MCF 10A (cell line): ENCODE measurements at regions of chr9 and their contacts with region 1.

Region 1: GRCh38 chr9:94139672-94140417 is 55.6 kb downstream of the PTPDC1 start:
- DNase-seq: peak; percentile 97
- H3K4me3 Mint-ChIP-seq: peak overlapping the region; percentile 62
- H3K27ac Mint-ChIP-seq: peak overlapping the region; percentile 93
- H3K4me1 Mint-ChIP-seq: peaks cover 69% of the 10 kb centered on the region
- H3K27me3 Mint-ChIP-seq: no peaks in the 10 kb centered on the region
- CTCF ChIP-seq: no peak

Region 2: GRCh38 chr9:94084314-94084713 is 55.5 kb before region 1 on chr9 and contains the start of gene PTPDC1:
- CTCF ChIA-PET with region 1: interaction called, 7 read pairs
- POLR2A ChIA-PET with region 1: interaction called, 15 read pairs
- intact Hi-C with region 1: no loop called
- DNase-seq: peak; percentile 32
- H3K4me3 Mint-ChIP-seq: peak within 1 kb of the TSS; percentile 47
- H3K27ac Mint-ChIP-seq: peak within 1 kb of the TSS; percentile 85
- H3K4me1 Mint-ChIP-seq: peaks cover 23% of the 10 kb centered on the region
- H3K27me3 Mint-ChIP-seq: no peaks in the 10 kb centered on the region
- CTCF ChIP-seq: no peak
- total RNA-seq, gene PTPDC1: 42.2 and 49.9 TPM in 2 replicates

Region 3: GRCh38 chr9:94127806-94128205 is 12.0 kb before region 1 on chr9:
- CTCF ChIA-PET with region 1: no interaction called
- POLR2A ChIA-PET with region 1: interaction called, 18 read pairs
- intact Hi-C with region 1: no loop called
- DNase-seq: no peak
- H3K4me3 Mint-ChIP-seq: no peak overlapping the region
- H3K27ac Mint-ChIP-seq: no peak overlapping the region
- H3K4me1 Mint-ChIP-seq: peaks cover 5% of the 10 kb centered on the region
- H3K27me3 Mint-ChIP-seq: no peaks in the 10 kb centered on the region
- CTCF ChIP-seq: no peak

Region 4: DNA sequence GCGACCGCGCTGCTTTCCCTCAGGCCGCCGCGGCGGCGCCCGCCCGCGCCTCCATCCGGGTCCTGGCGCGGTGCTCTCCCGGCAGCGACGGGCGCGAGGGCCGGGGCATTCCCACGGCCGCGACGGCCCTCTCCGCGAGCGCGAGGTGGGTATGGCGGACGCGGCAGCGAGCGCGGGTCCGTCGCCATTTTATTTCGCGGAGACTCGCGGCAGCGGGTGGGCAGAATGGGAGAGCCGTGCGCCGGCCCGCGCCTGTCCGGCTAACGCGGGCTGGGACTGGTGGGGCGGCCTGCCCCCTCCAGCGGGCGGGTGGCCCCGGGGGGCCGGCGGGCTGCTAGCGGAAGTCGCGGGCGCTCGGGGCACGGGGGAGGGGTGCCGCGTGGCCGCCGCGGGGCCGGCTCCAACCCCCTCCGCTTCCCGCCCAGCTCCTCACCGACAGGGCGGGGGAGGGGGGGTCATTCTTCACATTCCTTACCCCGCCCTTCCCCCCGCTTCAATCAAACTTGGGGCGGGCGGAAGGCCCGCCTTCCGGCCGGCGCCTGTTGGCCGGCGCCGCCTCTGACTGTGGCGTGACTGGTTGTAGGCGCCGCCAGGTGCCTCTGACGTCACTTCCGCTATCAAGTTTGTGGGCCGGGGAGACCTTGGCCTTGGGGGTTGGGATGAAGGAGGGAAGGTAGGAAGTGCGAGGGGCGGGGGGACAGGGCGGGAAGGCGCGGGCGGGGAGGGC is 26.6 kb after region 1 on chr9:
- CTCF ChIA-PET with region 1: interaction called, 10 read pairs
- POLR2A ChIA-PET with region 1: interaction called, 330 read pairs
- intact Hi-C with region 1: loop called (anchors 1 kb)
- DNase-seq: peak; percentile 99
- H3K4me3 Mint-ChIP-seq: peak overlapping the region; percentile 83
- H3K27ac Mint-ChIP-seq: peak overlapping the region; percentile 86
- H3K4me1 Mint-ChIP-seq: peaks cover 22% of the 10 kb centered on the region
- H3K27me3 Mint-ChIP-seq: no peaks in the 10 kb centered on the region
- CTCF ChIP-seq: no peak

Region 5: DNA sequence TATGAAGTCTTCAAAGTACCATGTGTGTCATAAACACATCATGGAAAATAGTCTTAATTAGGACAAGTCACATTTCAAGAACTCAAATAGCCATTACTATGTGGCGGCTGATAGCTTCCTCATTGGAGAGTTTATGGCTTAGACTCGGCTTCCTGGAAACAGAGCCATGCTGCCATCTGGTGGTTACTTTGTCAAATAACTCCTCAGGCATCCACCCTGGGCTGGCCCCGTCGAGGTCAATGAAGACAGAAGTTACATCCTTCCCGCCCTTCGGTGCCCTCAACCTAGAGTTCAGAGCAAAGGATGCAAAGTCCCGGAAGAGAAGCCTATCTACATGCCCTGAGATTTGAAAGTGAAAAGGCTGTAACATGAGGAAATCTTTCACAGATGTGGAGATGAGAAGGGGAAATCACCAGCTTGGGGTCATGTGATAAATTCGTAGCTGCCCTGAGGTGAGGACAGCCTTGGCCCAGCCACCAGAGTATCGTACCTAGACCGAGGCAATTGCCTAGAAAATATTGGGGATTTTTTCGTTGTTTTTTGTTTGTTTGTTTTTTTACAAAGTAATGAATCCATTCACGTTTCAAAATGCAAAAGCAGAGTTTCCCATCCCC is 73.8 kb after region 1 on chr9:
- CTCF ChIA-PET with region 1: interaction called, 3 read pairs
- POLR2A ChIA-PET with region 1: no interaction called
- intact Hi-C with region 1: loop called (anchors 2 kb)
- DNase-seq: peak; percentile 85
- H3K4me3 Mint-ChIP-seq: no peak overlapping the region
- H3K27ac Mint-ChIP-seq: no peak overlapping the region
- H3K4me1 Mint-ChIP-seq: peaks cover 11% of the 10 kb centered on the region
- H3K27me3 Mint-ChIP-seq: no peaks in the 10 kb centered on the region
- CTCF ChIP-seq: peak; percentile 72